ENCODE measurements at regions of chr6 and their contacts with region 1.

Region 1: DNA sequence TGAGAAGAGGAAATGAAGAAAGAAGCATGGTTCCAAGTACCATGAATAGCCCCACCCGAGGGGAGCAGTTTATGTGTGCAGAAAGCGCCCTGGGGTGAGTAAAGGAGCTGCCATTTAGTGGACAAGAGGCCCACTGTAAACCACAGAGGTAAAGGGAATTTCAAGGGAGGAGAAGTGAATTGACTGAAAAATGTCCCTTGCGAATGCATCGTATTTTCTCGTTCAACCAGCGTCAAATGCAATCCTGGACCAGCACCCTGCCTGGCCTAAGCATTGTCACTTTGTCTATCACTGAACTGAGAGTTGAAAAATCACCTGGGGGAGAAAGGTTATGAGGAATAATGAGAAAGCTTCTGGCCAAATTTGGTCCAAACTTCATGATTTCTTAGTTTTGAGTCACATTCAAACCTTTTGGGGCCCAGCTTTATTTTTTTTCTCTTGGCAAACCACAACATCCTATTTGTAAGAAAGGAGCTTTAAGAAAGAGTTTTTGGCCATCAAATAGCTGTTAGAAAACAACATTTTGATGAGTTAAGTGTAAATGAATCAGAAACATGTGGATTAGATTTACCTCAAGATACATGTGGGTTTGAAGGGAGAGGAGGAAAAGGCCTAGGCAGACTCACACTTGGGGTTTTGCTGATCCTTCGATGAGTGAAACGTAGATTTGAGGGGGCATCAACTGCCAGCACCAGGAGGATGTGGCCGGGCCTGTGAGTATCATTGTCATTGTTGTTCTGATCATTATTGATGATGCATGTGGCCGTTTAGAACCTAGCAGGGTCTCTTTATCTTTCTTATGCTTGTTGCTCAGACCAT is 214.0 kb downstream of the CLIC5 start:
- DNase-seq: peak; percentile 33
- H3K4me3 Mint-ChIP-seq: peak overlapping the region; percentile 2
- H3K27ac Mint-ChIP-seq: no peak overlapping the region
- H3K4me1 Mint-ChIP-seq: no peaks in the 10 kb centered on the region
- H3K27me3 Mint-ChIP-seq: no peaks in the 10 kb centered on the region

Region 2: DNA sequence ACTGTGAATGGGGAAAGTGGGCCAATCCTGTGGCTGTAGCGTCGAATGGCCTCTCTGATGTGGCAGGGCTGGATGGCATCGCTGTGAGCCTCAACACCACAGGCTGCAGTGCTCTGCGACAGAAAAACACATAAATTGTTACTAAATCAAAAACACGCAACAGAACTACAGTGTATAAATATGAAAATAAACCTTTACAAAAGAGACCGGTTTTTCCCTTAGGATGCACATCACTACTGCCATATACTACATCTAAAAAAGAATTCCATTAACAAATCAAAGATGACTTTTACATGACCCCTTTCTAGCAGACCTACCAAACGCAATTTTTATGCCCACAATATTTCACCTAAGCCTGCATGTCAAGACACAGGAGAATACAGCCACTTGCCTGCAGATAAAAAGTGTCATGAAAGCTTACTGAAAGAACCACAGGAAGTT is 869.0 kb before region 1 on chr6:
- intact Hi-C with region 1: loop called (anchors 10 kb)
- DNase-seq: no peak
- H3K4me3 Mint-ChIP-seq: peak overlapping the region; percentile 79
- H3K27ac Mint-ChIP-seq: peak overlapping the region; percentile 94
- H3K4me1 Mint-ChIP-seq: peaks cover 56% of the 10 kb centered on the region
- H3K27me3 Mint-ChIP-seq: no peaks in the 10 kb centered on the region

Region 3: GRCh38 chr6:45163952-45164766 is 637.5 kb before region 1 on chr6:
- intact Hi-C with region 1: loop called (anchors 2 kb)
- DNase-seq: peak; percentile 31
- H3K4me3 Mint-ChIP-seq: peak overlapping the region; percentile 35
- H3K27ac Mint-ChIP-seq: peak overlapping the region; percentile 89
- H3K4me1 Mint-ChIP-seq: peaks cover 62% of the 10 kb centered on the region
- H3K27me3 Mint-ChIP-seq: no peaks in the 10 kb centered on the region

Region 4: DNA sequence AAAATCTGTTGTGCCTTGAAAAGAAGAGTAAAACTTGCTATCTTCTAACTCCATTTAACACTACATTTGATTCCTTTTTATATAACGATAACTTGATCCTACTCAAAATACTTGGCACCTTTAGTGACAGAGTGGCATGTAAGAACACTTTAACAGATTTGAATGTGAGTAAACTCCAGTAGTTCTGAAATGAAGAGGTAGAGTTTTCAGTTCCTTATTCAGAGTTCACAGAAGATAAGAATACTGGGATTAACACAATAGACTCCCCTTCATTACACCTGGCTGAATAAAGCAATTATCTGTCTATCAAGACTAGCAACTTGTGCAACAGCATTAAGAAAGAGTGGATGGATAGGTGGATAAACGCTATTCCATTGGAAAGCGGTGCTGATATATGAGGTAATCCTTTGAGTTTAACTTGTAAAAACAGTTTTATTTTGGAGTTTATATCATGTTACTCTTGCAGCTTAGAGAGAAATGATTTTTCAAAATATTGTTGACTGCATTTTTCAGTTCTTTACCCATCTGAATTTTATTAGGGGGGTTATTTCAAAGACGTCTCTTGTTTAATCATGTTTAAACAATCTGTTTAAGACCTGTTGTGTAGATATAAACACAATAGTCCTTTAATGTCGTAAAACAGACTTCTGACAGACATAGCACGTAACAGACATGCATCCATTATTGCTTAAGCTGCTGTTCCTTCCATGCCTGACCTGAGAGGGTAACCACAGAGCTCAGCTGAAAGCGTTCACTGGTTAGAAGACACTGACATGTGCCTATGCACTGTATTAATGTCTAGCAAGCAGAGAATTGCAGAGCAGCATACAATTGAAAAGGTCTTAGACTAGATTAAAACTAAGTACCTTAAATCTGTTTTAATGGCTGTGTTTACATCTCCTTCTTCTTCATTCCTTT is 321.6 kb before region 1 on chr6:
- intact Hi-C with region 1: loop called (anchors 5 kb)
- DNase-seq: no peak
- H3K4me3 Mint-ChIP-seq: no peak overlapping the region
- H3K27ac Mint-ChIP-seq: no peak overlapping the region
- H3K4me1 Mint-ChIP-seq: peaks cover 16% of the 10 kb centered on the region
- H3K27me3 Mint-ChIP-seq: peaks cover 3% of the 10 kb centered on the region

Region 5: GRCh38 chr6:45714741-45715507 is 86.8 kb before region 1 on chr6:
- intact Hi-C with region 1: loop called (anchors 1 kb)
- DNase-seq: peak; percentile 46
- H3K4me3 Mint-ChIP-seq: no peak overlapping the region
- H3K27ac Mint-ChIP-seq: peak overlapping the region; percentile 73
- H3K4me1 Mint-ChIP-seq: peaks cover 38% of the 10 kb centered on the region
- H3K27me3 Mint-ChIP-seq: peaks cover 2% of the 10 kb centered on the region

Region 6: GRCh38 chr6:45822246-45822812 is 20.6 kb after region 1 on chr6:
- intact Hi-C with region 1: loop called (anchors 1 kb)
- DNase-seq: no peak
- H3K4me3 Mint-ChIP-seq: peak overlapping the region; percentile 41
- H3K27ac Mint-ChIP-seq: peak overlapping the region; percentile 76
- H3K4me1 Mint-ChIP-seq: peaks cover 32% of the 10 kb centered on the region
- H3K27me3 Mint-ChIP-seq: no peaks in the 10 kb centered on the region

Region 7: DNA sequence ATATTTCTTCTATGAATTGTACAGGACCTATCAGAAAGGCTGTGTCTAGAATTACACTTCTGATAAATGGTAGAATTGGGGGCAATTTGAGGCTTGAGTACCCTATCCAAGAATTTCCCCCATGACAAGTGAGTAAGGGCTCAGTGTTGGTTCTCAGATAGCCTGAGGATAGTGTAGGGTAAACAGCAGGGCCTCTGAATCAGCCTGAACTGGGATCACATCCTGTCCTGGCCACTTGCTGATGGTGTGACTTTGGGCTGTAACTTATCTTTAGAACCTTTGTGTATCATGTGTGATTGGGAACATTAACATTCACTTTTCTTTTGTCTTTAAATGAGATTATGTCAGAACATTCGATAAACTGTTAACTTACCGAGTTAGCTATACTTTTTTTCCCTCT is 63.0 kb after region 1 on chr6:
- intact Hi-C with region 1: no loop called
- DNase-seq: no peak
- H3K4me3 Mint-ChIP-seq: no peak overlapping the region
- H3K27ac Mint-ChIP-seq: no peak overlapping the region
- H3K4me1 Mint-ChIP-seq: no peaks in the 10 kb centered on the region
- H3K27me3 Mint-ChIP-seq: peaks cover 14% of the 10 kb centered on the region

Region 8: DNA sequence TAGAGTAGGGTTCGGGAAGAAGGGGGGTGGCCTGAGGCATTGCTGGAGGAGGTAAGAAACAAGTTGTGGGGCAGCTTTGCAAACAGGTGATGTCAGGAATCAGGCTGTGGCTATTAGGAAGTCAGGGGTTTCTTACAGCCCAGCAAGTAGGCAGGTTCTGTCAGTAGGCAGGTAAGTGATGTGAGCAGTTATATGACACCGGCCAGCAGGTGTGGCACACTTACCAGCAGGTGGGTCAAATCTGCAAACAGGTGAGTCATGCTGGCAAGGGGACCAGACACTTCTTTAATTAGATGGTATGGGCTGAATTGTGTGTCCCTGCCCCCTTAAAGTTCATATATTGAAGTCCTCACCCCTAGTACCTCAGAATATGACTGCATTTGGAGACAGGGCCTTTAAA is 311.7 kb after region 1 on chr6:
- intact Hi-C with region 1: no loop called
- DNase-seq: no peak
- H3K4me3 Mint-ChIP-seq: no peak overlapping the region
- H3K27ac Mint-ChIP-seq: no peak overlapping the region
- H3K4me1 Mint-ChIP-seq: no peaks in the 10 kb centered on the region
- H3K27me3 Mint-ChIP-seq: no peaks in the 10 kb centered on the region